ENCODE measurements at regions of chr1 and their contacts with region 1.

Region 1: DNA sequence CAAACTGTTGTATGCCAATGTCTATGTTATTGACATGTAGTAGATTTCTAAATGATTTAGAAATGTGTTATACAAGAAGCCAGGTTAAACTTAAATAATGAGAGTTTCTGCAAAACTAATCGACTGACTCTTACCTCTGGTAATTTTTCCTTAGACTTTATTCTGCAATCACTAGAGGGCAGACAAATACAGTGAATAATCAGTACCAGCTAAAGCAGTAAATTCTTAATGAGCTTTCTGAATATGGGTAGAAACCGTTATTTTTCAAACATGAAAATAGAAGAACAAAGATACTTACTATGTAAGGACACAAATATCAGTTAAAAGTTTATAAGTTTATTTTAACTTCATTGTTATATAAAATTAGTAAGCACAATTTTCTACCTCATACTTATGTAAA is 97.9 kb upstream of the RGS1 start:
- DNase-seq: no peak

Region 2: DNA sequence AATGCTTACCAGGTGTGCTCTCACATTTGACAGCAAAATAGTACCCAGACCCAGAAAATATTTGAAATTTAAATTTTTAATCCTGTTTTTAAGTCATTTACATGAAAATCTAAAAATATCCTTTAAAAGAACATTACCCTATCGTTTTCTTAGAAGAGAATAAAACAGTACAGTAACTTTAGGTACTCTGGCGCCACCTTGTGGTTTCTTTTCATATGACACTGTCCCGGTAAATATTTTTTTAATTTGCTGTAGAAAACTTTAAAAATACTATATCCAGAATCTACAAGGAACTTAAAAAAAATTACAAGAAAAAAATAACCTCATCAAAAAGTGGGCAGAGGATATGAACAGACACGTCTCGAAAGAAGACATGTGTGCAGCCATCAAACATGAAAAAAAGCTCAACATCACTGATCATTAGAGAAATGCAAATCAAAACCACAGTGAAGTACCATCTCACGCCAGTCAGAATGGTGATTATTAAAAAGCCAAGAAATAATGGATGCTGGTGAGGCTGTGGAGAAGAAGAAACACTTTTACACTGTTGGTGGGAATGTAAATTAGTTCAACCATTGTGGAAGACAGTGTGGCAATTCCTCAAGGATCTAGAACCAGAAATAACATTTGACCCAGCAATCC is 31.7 kb before region 1 on chr1:
- intact Hi-C with region 1: no loop called
- DNase-seq: no peak

Region 3: GRCh38 chr1:192609110-192610079 is 131.8 kb after region 1 on chr1:
- intact Hi-C with region 1: loop called (anchors 2 kb)
- DNase-seq: peak; percentile 81

Region 4: GRCh38 chr1:193019442-193020026 is 541.9 kb after region 1 on chr1:
- intact Hi-C with region 1: loop called (anchors 2 kb)
- DNase-seq: no peak

Region 5: GRCh38 chr1:193104906-193105820 is 627.5 kb after region 1 on chr1 and contains the start of gene GLRX2:
- intact Hi-C with region 1: loop called (anchors 10 kb)
- DNase-seq: peak; percentile 95
- total RNA-seq, gene GLRX2: 29.0 TPM